ENCODE measurements at regions of chr5 and their contacts with region 1.

Region 1: GRCh38 chr5:43066799-43067741 is 27.0 kb upstream of the ANXA2R start:
- DNase-seq: peak; percentile 73 to 94 (median 86)
- H3K4me3 ChIP-seq: peak overlapping the region; percentile 54 to 96 (median 85)
- H3K27ac ChIP-seq: peak overlapping the region; percentile 96 to 100 (median 100)
- H3K27me3 ChIP-seq: no peaks in the 10 kb centered on the region
- CTCF ChIP-seq: peak in 27 of 56 donors; percentile 4 to 50 (median 22)

Region 2: DNA sequence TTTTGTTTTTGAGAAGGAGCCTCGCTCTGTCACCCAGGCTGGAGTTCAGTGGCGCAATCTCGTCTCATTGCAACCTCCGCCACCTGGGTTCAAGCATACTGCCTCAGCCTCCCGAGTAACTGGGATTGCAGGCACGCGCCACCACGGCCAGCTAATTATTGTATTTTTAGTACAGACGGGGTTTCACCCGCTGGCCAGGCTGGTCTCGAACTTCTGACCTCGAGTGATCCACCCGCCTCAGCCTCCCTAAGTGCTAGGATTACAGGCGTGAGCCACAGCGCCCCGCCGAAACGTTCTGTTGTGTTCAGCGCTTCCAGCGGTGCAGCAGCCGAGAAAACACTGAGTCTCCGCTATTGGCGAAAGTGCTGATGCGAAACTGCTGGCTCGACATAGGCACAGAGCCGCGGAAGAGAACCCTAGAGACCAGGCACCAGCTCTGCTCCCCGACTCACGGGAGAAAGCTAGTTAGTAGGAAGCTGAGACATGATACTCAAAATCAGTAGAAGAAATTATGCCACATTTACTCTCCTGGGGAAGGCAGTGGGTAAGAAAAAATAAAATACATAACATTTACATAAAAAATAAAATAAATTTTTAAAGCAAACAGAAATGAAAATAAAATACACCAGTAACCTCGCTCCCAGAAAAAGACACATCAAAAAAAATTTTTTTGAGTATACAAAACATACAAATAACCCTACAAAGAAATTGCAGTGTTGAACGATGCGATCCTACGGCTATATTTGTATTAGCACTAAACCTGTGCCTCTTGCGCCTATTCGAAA is 58.5 kb before region 1 on chr5:
- intact Hi-C with region 1: loop called in 1 of 2 experiments (anchors 2 kb)
- DNase-seq: peak; percentile 12 to 82 (median 72)
- H3K4me3 ChIP-seq: peak overlapping the region; percentile 15 to 76 (median 56)
- H3K27ac ChIP-seq: peak overlapping the region; percentile 45 to 97 (median 91)
- H3K27me3 ChIP-seq: peaks cover 0 to 78% (median 61%) of the 10 kb centered on the region in 45 donors
- CTCF ChIP-seq: peak in 17 of 56 donors; percentile 2 to 42 (median 24)

Region 3: GRCh38 chr5:43105369-43106289 is 38.6 kb after region 1 on chr5:
- intact Hi-C with region 1: loop called (anchors 5 kb)
- DNase-seq: peak; percentile 77 to 87 (median 84)
- H3K4me3 ChIP-seq: peak overlapping the region; percentile 8 to 74 (median 55)
- H3K27ac ChIP-seq: peak overlapping the region in 55 of 59 donors; percentile 2 to 89 (median 69)
- H3K27me3 ChIP-seq: no peaks in the 10 kb centered on the region
- CTCF ChIP-seq: peak; percentile 85 to 100 (median 98)

Region 4: GRCh38 chr5:43120720-43121564 is 53.9 kb after region 1 on chr5 and contains the start of gene ZNF131:
- intact Hi-C with region 1: loop called (anchors 2 to 5 kb)
- DNase-seq: peak; percentile 90 to 98 (median 95)
- H3K4me3 ChIP-seq: peak within 1 kb of the TSS; percentile 62 to 99 (median 91)
- H3K27ac ChIP-seq: peak within 1 kb of the TSS; percentile 77 to 100 (median 97)
- H3K27me3 ChIP-seq: no peaks in the 10 kb centered on the region
- CTCF ChIP-seq: peak in 9 of 56 donors; percentile 5 to 35 (median 21)
- total RNA-seq, gene ZNF131: 29.1 to 65.2 (median 49.2) TPM

Region 5: GRCh38 chr5:43313035-43313853 is 246.2 kb after region 1 on chr5 and contains the start of gene HMGCS1:
- intact Hi-C with region 1: loop called in 1 of 2 experiments (anchors 5 kb)
- DNase-seq: peak; percentile 95 to 99 (median 99)
- H3K4me3 ChIP-seq: peak within 1 kb of the TSS; percentile 61 to 100 (median 95)
- H3K27ac ChIP-seq: peak within 1 kb of the TSS; percentile 62 to 97 (median 91)
- H3K27me3 ChIP-seq: no peaks in the 10 kb centered on the region
- CTCF ChIP-seq: peak in 28 of 56 donors; percentile 5 to 57 (median 24)
- total RNA-seq, gene HMGCS1: 39.2 to 223 (median 105) TPM

Region 6: GRCh38 chr5:43523662-43524072 is 456.6 kb after region 1 on chr5:
- intact Hi-C with region 1: no loop called
- DNase-seq: no peak
- H3K4me3 ChIP-seq: no peak overlapping the region
- H3K27ac ChIP-seq: no peak overlapping the region
- H3K27me3 ChIP-seq: no peaks in the 10 kb centered on the region
- CTCF ChIP-seq: no peak